ENCODE measurements at regions of chr5 and their contacts with region 1.

Region 1: DNA sequence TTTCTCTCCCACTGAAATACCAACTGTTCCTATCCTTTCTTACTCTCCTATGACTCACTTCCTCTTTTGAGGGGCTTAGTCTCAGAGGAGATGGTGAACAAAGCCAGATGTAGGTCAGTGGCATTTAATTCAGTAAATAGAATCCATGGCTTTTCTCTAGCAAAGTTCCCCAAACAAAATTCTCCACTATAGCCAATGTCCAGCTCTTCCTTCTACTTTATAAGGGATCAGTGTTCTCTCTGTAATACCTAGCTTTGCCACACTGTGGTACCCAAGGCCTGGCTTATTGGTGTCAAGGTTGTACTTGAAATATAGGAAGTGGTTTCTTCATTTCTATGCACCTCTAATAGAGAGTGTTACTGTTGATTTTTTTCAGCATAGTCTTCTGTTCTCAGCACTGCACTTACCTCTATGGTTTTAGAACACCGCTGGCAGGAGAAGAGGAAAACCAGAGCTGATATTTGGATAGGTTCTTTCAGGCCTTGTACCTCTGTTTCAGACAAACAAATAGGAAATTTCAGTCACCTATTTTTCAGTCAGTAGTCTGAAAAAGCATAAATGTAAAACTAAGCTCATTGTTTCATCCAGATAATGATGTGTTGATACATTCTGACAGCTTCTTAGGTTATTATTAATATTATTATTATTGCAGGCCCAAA is 40.6 kb upstream of the ITGA2 start:
- DNase-seq: peak; percentile 7 to 76 (median 59)
- ATAC-seq: peak; percentile 99
- H3K4me3 ChIP-seq: no peak overlapping the region
- H3K4me3 Mint-ChIP-seq: no peak overlapping the region
- H3K27ac ChIP-seq: no peak overlapping the region
- H3K27ac Mint-ChIP-seq: peak overlapping the region in 2 of 9 donors; percentile 7 to 18
- H3K4me1 ChIP-seq: no peaks in the 10 kb centered on the region
- H3K4me1 Mint-ChIP-seq: peaks cover 4 to 29% (median 16%) of the 10 kb centered on the region in 7 donors
- H3K27me3 ChIP-seq: no peaks in the 10 kb centered on the region
- H3K27me3 Mint-ChIP-seq: peaks cover 0 to 4% (median 0%) of the 10 kb centered on the region in 5 donors

Region 2: GRCh38 chr5:52684056-52684455 is 264.5 kb before region 1 on chr5:
- CTCF ChIA-PET with region 1: no interaction called
- POLR2A ChIA-PET with region 1: no interaction called
- intact Hi-C with region 1: no loop called
- DNase-seq: no peak
- ATAC-seq: no peak
- H3K4me3 ChIP-seq: no peak overlapping the region
- H3K4me3 Mint-ChIP-seq: no peak overlapping the region
- H3K27ac ChIP-seq: no peak overlapping the region
- H3K27ac Mint-ChIP-seq: no peak overlapping the region
- H3K4me1 ChIP-seq: no peaks in the 10 kb centered on the region
- H3K4me1 Mint-ChIP-seq: peaks cover 0 to 1% (median 0%) of the 10 kb centered on the region in 7 donors
- H3K27me3 ChIP-seq: no peaks in the 10 kb centered on the region
- H3K27me3 Mint-ChIP-seq: peaks cover 0 to 21% (median 5%) of the 10 kb centered on the region in 5 donors

Region 3: DNA sequence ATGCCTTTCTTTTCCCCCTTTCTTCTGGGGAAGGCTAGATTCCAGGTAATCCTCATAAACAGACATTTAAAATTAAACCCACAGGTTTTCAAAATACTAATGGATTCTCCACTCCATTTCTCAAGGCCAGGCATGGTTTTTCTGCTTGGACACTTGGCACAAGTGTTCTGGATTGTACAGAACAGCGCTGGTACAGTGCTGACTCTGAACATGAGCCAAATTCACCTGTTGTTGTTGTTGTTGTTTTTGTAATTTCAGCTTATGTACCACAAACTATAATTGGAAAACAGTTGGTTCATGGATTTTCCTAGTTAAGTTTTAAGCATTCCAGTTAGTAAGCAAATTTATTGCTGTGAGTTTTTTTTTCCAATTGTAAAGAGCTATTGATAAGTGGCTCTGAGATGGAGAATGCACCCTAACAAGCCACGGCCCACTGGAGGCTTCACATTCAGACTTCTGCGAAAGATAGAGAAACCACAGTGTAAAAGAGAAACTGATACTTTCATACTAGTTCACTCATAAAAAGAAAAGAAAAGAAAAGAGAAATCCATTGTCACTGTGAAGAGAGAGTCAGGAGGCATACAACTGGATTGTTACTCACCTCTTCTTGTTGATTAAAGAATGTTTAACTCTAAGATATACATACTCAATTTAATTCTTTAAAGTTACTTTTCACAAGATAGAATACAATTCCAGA is 177.1 kb before region 1 on chr5:
- CTCF ChIA-PET with region 1: no interaction called
- POLR2A ChIA-PET with region 1: no interaction called
- intact Hi-C with region 1: no loop called
- DNase-seq: peak in 4 of 9 donors; percentile 21 to 43 (median 26)
- ATAC-seq: peak; percentile 71
- H3K4me3 ChIP-seq: peak overlapping the region; percentile 3
- H3K4me3 Mint-ChIP-seq: peak overlapping the region in 9 of 10 donors; percentile 42 to 78 (median 67)
- H3K27ac ChIP-seq: peak overlapping the region; percentile 31
- H3K27ac Mint-ChIP-seq: peak overlapping the region; percentile 67 to 94 (median 85)
- H3K4me1 ChIP-seq: peaks cover 34 to 45% of the 10 kb centered on the region in 2 donors
- H3K4me1 Mint-ChIP-seq: peaks cover 35 to 76% (median 49%) of the 10 kb centered on the region in 7 donors
- H3K27me3 ChIP-seq: no peaks in the 10 kb centered on the region
- H3K27me3 Mint-ChIP-seq: peaks cover 0 to 7% (median 0%) of the 10 kb centered on the region in 5 donors

Region 4: DNA sequence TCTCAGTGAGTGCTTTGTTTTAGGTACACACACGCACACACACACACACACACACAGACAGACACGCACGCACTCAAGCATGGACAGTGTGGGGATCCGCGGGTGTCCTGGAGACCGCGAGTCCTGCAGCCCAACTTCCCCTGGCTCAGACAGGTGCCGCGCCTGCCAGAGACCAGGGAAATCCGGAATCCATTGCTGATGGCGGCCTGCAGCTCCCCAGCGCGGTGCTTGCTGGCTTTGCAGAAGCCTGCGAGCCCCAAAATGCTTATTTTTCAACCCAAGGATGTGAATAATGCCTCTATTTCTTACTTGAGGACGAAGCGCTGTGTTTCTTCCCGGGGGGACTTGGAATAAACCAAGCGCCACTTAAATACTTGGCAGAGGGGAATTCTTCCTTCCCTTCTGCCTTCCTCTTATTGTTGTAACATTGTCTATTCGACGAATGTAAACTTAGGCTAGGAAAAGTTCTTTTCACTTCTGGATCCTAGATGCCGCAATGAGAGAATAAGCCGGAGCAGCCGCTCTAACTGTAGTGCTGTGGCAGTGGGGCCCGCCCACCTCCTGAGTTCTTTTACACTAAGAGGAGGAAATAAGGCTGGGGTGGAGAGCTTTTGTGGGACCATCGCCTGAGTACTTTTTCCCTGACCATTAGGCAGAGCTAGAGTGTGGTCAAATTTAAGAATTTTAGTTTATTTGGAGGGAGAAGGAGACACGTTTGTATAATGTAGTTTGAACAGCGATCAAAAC is 41.4 kb after region 1 on chr5:
- CTCF ChIA-PET with region 1: interaction called, 7 read pairs
- POLR2A ChIA-PET with region 1: interaction called, 3 read pairs
- intact Hi-C with region 1: loop called (anchors 1 kb)
- DNase-seq: peak in 8 of 9 donors; percentile 7 to 46 (median 20)
- ATAC-seq: peak; percentile 59
- H3K4me3 ChIP-seq: peak overlapping the region; percentile 66
- H3K4me3 Mint-ChIP-seq: peak overlapping the region; percentile 64 to 86 (median 80)
- H3K27ac ChIP-seq: no peak overlapping the region
- H3K27ac Mint-ChIP-seq: peak overlapping the region in 4 of 9 donors; percentile 22 to 73 (median 42)
- H3K4me1 ChIP-seq: peaks cover 0 to 5% of the 10 kb centered on the region in 2 donors
- H3K4me1 Mint-ChIP-seq: peaks cover 6 to 44% (median 10%) of the 10 kb centered on the region in 7 donors
- H3K27me3 ChIP-seq: no peaks in the 10 kb centered on the region
- H3K27me3 Mint-ChIP-seq: peaks cover 0 to 40% (median 13%) of the 10 kb centered on the region in 5 donors

Region 5: GRCh38 chr5:53041071-53041692 is 92.6 kb after region 1 on chr5:
- CTCF ChIA-PET with region 1: no interaction called
- POLR2A ChIA-PET with region 1: interaction called, 3 read pairs
- intact Hi-C with region 1: loop called in 1 of 2 experiments (anchors 2 kb)
- DNase-seq: peak in 5 of 9 donors; percentile 6 to 49 (median 27)
- ATAC-seq: peak; percentile 81
- H3K4me3 ChIP-seq: peak overlapping the region; percentile 24
- H3K4me3 Mint-ChIP-seq: peak overlapping the region; percentile 16 to 88 (median 74)
- H3K27ac ChIP-seq: no peak overlapping the region
- H3K27ac Mint-ChIP-seq: peak overlapping the region; percentile 12 to 92 (median 66)
- H3K4me1 ChIP-seq: peaks cover 7 to 12% of the 10 kb centered on the region in 2 donors
- H3K4me1 Mint-ChIP-seq: peaks cover 11 to 77% (median 24%) of the 10 kb centered on the region in 7 donors
- H3K27me3 ChIP-seq: no peaks in the 10 kb centered on the region
- H3K27me3 Mint-ChIP-seq: peaks cover 0 to 4% (median 0%) of the 10 kb centered on the region in 5 donors

Region 6: DNA sequence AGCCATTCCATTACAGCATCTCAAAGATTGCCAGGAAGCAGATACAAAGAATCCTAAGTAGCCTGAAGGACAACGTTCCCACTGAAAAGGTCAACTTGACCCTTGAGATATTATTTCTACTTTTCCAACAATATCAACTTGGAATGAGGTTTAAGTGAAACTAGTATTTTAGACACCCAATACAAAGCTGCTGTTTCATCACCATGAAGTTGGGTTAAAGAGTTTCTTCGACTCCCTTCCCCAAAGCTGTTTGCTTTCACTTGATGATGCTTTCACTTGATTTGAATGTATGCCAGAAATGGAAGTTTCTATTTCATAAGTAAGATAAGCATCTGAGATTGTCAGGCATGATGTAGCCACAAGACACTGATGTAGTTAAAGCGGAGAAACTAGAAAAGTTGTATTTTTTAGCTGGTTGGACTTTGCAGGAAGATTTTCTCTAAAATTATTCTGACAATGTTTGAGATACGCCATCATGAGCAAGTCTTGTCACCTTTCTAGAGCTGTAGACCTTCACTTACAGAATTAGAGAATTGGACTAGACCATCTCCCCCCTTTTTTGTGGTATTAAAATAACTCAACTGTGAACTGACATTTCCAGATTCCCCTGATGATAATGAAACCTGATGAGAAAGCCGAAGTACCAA is 140.9 kb after region 1 on chr5:
- CTCF ChIA-PET with region 1: interaction called, 106 read pairs
- POLR2A ChIA-PET with region 1: interaction called, 3 read pairs
- intact Hi-C with region 1: no loop called
- DNase-seq: peak in 6 of 9 donors; percentile 29 to 60 (median 40)
- ATAC-seq: peak; percentile 65
- H3K4me3 ChIP-seq: no peak overlapping the region
- H3K4me3 Mint-ChIP-seq: peak overlapping the region in 7 of 10 donors; percentile 32 to 71 (median 47)
- H3K27ac ChIP-seq: no peak overlapping the region
- H3K27ac Mint-ChIP-seq: peak overlapping the region in 5 of 9 donors; percentile 25 to 76 (median 40)
- H3K4me1 ChIP-seq: peaks cover 0 to 16% of the 10 kb centered on the region in 2 donors
- H3K4me1 Mint-ChIP-seq: peaks cover 11 to 61% (median 19%) of the 10 kb centered on the region in 7 donors
- H3K27me3 ChIP-seq: no peaks in the 10 kb centered on the region
- H3K27me3 Mint-ChIP-seq: peaks cover 0 to 2% (median 0%) of the 10 kb centered on the region in 5 donors

Region 7: GRCh38 chr5:53114988-53115387 is 166.4 kb after region 1 on chr5:
- CTCF ChIA-PET with region 1: no interaction called
- POLR2A ChIA-PET with region 1: interaction called, 4 read pairs
- intact Hi-C with region 1: loop called in 1 of 2 experiments (anchors 1 kb)
- DNase-seq: no peak
- ATAC-seq: no peak
- H3K4me3 ChIP-seq: no peak overlapping the region
- H3K4me3 Mint-ChIP-seq: no peak overlapping the region
- H3K27ac ChIP-seq: no peak overlapping the region
- H3K27ac Mint-ChIP-seq: no peak overlapping the region
- H3K4me1 ChIP-seq: peaks cover 0 to 5% of the 10 kb centered on the region in 2 donors
- H3K4me1 Mint-ChIP-seq: peaks cover 10 to 16% (median 13%) of the 10 kb centered on the region in 7 donors
- H3K27me3 ChIP-seq: no peaks in the 10 kb centered on the region
- H3K27me3 Mint-ChIP-seq: peaks cover 0 to 6% (median 0%) of the 10 kb centered on the region in 5 donors

Region 8: GRCh38 chr5:54217826-54218503 is 1269.4 kb after region 1 on chr5:
- CTCF ChIA-PET with region 1: interaction called, 3 read pairs
- POLR2A ChIA-PET with region 1: no interaction called
- intact Hi-C with region 1: loop called (anchors 1 to 5 kb)
- DNase-seq: peak in 3 of 9 donors; percentile 8 to 37 (median 28)
- ATAC-seq: peak; percentile 51
- H3K4me3 ChIP-seq: no peak overlapping the region
- H3K4me3 Mint-ChIP-seq: no peak overlapping the region
- H3K27ac ChIP-seq: no peak overlapping the region
- H3K27ac Mint-ChIP-seq: no peak overlapping the region
- H3K4me1 ChIP-seq: no peaks in the 10 kb centered on the region
- H3K4me1 Mint-ChIP-seq: peaks cover 0 to 23% (median 10%) of the 10 kb centered on the region in 7 donors
- H3K27me3 ChIP-seq: no peaks in the 10 kb centered on the region
- H3K27me3 Mint-ChIP-seq: peaks cover 0 to 2% (median 0%) of the 10 kb centered on the region in 5 donors

Region 9: DNA sequence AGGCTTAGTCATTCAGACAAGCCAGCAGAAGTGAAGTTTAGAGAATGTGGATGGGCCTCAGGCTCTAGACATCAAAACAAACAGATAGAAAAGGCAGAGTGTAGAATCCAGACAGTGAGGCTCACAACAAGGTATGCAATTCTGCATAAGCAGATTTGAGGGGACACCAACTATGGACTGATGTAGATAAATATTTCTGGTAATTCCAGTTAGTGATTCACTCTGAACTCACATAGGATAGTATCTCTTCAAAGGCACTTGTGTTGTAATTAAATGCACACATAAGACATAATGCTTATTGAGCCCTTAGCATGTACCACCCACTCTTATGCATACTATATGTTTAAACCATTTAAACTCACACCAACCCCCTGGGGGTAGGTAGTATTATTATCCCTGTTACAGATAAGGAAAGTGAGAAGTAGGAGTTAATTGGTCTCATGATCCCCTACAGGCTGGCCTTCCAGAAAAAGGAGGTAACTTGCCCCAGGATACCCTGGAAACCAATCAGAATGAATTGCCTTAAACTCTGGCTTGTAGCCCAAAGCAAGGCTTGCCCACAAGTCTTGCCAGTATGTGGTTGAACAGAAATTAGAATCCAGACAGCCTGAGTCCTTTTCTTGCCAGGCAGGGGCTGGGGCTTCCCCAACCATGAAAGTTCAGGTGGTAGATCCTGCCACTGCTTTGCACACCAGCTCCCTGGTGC is 1467.5 kb after region 1 on chr5:
- CTCF ChIA-PET with region 1: no interaction called
- POLR2A ChIA-PET with region 1: no interaction called
- intact Hi-C with region 1: loop called in 1 of 2 experiments (anchors 5 kb)
- DNase-seq: no peak
- ATAC-seq: no peak
- H3K4me3 ChIP-seq: no peak overlapping the region
- H3K4me3 Mint-ChIP-seq: no peak overlapping the region
- H3K27ac ChIP-seq: no peak overlapping the region
- H3K27ac Mint-ChIP-seq: no peak overlapping the region
- H3K4me1 ChIP-seq: no peaks in the 10 kb centered on the region
- H3K4me1 Mint-ChIP-seq: peaks cover 0 to 1% (median 0%) of the 10 kb centered on the region in 7 donors
- H3K27me3 ChIP-seq: no peaks in the 10 kb centered on the region
- H3K27me3 Mint-ChIP-seq: peaks cover 4 to 32% (median 10%) of the 10 kb centered on the region in 5 donors